Activated CD4-positive, alpha-beta T cell treated with anti-CD3 and anti-CD28 coated beads, Interleukin-2, amount 10 ng/mL, durations not matched to agents 7 days and 5 days (primary cell): ENCODE measurements at regions of chr3 and their contacts with region 1.

Region 1: DNA sequence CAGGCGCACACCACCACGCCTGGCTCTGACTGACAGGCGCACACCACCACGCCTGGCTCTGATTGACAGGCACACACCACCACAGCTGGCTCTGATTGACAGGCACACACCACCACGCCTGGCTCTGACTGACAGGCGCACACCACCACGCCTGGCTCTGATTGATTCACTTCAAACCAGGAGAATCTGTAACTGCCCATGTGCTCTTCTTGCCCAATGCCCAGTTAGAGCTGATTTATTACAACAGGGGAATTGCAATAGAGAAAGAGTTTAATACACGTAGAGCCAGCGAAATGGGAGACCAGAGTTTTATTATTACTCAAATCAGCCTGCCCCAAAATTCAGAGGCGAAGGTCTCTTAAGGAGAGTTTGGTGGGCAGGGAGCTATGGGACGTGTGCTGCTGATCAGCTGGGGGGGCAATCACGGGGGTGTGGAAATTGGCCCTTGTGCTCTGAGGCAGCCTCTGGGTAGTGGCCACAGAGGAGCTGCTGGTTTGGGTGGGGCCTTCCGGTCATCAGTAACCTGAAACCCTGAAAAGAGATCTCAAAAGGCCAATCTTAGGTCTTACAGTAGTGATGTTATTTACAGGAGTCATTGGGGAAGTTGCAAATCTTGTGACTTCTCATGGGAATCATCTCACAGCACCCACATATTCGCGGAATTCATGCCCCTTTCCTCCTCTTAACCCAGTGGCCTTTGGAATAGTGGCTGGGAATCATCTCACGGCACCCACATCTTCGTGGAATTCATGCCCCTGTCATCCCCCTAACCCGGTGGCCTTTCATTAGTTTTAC is 63.8 kb upstream of the TFRC start:
- DNase-seq: no peak
- H3K4me3 Mint-ChIP-seq: no peak overlapping the region
- H3K27ac Mint-ChIP-seq: no peak overlapping the region
- H3K4me1 Mint-ChIP-seq: no peaks in the 10 kb centered on the region
- H3K27me3 Mint-ChIP-seq: peaks cover 3% of the 10 kb centered on the region

Region 2: GRCh38 chr3:196131856-196132255 is 13.8 kb before region 1 on chr3:
- CTCF ChIA-PET with region 1: interaction called, 10 read pairs
- POLR2A ChIA-PET with region 1: interaction called, 3 read pairs
- DNase-seq: no peak
- H3K4me3 Mint-ChIP-seq: no peak overlapping the region
- H3K27ac Mint-ChIP-seq: no peak overlapping the region
- H3K4me1 Mint-ChIP-seq: peaks cover 34% of the 10 kb centered on the region
- H3K27me3 Mint-ChIP-seq: no peaks in the 10 kb centered on the region

Region 3: DNA sequence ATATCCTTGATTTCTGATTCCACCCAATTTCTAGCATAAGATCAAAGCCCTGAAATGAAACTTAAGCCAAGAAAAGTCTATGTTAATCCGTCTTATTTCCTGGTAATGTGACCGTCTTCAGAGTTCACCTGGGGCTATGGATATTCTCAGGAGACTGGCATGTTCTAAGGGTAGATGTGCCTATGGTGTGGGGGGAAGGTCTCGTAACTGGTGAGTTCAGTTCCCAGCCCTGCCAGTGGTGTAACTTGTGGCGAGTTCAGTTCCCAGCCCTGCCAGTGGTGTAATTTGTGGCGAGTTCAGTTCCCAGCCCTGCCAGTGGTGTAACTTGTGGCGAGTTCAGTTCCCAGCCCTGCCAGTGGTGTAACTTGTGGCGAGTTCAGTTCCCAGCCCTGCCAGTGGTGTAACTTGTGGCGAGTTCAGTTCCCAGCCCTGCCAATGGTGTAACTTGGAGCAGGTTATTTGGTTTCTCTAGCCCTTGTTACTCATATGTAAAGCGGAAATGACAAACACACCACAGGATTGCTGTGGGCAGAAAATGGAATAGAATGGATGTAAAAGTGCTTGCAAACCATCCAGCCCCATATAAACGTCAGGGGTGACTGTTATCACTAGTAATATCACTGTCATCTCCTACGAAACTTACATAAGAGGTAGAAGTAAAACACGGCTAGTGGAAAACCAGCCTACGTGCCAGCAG is 101.1 kb after region 1 on chr3:
- CTCF ChIA-PET with region 1: no interaction called
- POLR2A ChIA-PET with region 1: no interaction called
- DNase-seq: no peak
- H3K4me3 Mint-ChIP-seq: no peak overlapping the region
- H3K27ac Mint-ChIP-seq: no peak overlapping the region
- H3K4me1 Mint-ChIP-seq: peaks cover 5% of the 10 kb centered on the region
- H3K27me3 Mint-ChIP-seq: no peaks in the 10 kb centered on the region